Activated T-helper 2 cell treated with anti-CD3 and anti-CD28 coated beads, Interferon-gamma antibody, Interleukin-2, Interleukin-4, amounts not matched to agents 10 μg/mL and 5 μg/mL and 100 μg/mL, durations not matched to agents 14 hours and 24 hours and 36 hours (primary cell): ENCODE measurements at regions of chr9 and their contacts with region 1.

Region 1: GRCh38 chr9:68584189-68585033 is 43.7 kb upstream of the TMEM252 start:
- DNase-seq: peak; percentile 71
- H3K4me3 Mint-ChIP-seq: no peak overlapping the region
- H3K27ac Mint-ChIP-seq: peak overlapping the region; percentile 44
- H3K4me1 Mint-ChIP-seq: peaks cover 14% of the 10 kb centered on the region
- H3K27me3 Mint-ChIP-seq: no peaks in the 10 kb centered on the region

Region 2: GRCh38 chr9:68678430-68678829 is 94.0 kb after region 1 on chr9:
- intact Hi-C with region 1: no loop called
- DNase-seq: no peak
- H3K4me3 Mint-ChIP-seq: no peak overlapping the region
- H3K27ac Mint-ChIP-seq: no peak overlapping the region
- H3K4me1 Mint-ChIP-seq: peaks cover 12% of the 10 kb centered on the region
- H3K27me3 Mint-ChIP-seq: peaks cover 8% of the 10 kb centered on the region

Region 3: DNA sequence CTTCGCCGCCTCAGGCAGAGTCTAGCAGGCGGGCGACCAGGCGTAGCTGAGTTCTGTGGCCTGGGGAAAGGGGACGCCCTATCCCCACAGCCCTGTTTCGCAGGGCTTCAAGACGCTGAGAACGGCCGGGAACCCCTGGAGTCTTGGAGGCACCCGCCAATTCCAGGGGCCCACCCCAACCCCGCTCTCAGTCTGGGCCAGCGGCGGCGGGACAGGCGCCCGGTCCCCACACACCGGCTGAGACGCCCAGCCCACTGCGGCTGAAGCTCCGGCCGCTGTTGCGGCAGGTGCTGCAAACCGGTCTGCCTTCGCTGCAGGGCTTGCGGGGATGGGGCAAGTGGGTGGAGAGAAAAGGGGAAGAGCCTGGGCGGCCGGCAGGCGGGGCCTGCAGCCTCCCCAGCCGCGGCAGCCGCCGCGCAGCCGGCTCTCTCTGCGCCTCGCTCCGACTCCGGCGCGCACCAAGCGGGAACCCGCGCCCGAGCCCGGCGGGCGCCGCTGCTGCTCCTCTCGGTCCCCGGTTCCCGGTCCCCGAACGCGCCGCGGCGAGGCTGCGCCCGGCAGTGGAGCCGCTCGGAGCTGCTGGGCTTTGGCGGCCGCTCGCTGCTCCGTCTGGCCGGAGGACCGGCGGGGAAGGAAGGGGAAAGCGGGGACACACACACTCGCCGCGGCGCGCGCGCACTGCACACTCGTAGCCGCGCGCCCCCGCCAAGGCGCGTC is 120.6 kb after region 1 on chr9 and contains the start of gene PIP5K1B:
- intact Hi-C with region 1: loop called (anchors 1 kb)
- DNase-seq: peak; percentile 69
- H3K4me3 Mint-ChIP-seq: peak within 1 kb of the TSS; percentile 88
- H3K27ac Mint-ChIP-seq: peak within 1 kb of the TSS; percentile 67
- H3K4me1 Mint-ChIP-seq: peaks cover 54% of the 10 kb centered on the region
- H3K27me3 Mint-ChIP-seq: peaks cover 36% of the 10 kb centered on the region
- total RNA-seq, gene PIP5K1B: 76.2 and 77.2 TPM in 2 replicates

Region 4: GRCh38 chr9:68779558-68780384 is 195.4 kb after region 1 on chr9:
- intact Hi-C with region 1: loop called (anchors 1 kb)
- DNase-seq: peak; percentile 91
- H3K4me3 Mint-ChIP-seq: no peak overlapping the region
- H3K27ac Mint-ChIP-seq: no peak overlapping the region
- H3K4me1 Mint-ChIP-seq: peaks cover 17% of the 10 kb centered on the region
- H3K27me3 Mint-ChIP-seq: no peaks in the 10 kb centered on the region

Region 5: GRCh38 chr9:68887232-68887631 is 302.8 kb after region 1 on chr9:
- intact Hi-C with region 1: loop called (anchors 10 kb)
- DNase-seq: no peak
- H3K4me3 Mint-ChIP-seq: peak overlapping the region; percentile 17
- H3K27ac Mint-ChIP-seq: peak overlapping the region; percentile 62
- H3K4me1 Mint-ChIP-seq: peaks cover 35% of the 10 kb centered on the region
- H3K27me3 Mint-ChIP-seq: no peaks in the 10 kb centered on the region

Region 6: GRCh38 chr9:69027355-69028096 is 443.1 kb after region 1 on chr9:
- intact Hi-C with region 1: loop called (anchors 1 kb)
- DNase-seq: peak; percentile 30
- H3K4me3 Mint-ChIP-seq: no peak overlapping the region
- H3K27ac Mint-ChIP-seq: no peak overlapping the region
- H3K4me1 Mint-ChIP-seq: peaks cover 54% of the 10 kb centered on the region
- H3K27me3 Mint-ChIP-seq: no peaks in the 10 kb centered on the region

Region 7: DNA sequence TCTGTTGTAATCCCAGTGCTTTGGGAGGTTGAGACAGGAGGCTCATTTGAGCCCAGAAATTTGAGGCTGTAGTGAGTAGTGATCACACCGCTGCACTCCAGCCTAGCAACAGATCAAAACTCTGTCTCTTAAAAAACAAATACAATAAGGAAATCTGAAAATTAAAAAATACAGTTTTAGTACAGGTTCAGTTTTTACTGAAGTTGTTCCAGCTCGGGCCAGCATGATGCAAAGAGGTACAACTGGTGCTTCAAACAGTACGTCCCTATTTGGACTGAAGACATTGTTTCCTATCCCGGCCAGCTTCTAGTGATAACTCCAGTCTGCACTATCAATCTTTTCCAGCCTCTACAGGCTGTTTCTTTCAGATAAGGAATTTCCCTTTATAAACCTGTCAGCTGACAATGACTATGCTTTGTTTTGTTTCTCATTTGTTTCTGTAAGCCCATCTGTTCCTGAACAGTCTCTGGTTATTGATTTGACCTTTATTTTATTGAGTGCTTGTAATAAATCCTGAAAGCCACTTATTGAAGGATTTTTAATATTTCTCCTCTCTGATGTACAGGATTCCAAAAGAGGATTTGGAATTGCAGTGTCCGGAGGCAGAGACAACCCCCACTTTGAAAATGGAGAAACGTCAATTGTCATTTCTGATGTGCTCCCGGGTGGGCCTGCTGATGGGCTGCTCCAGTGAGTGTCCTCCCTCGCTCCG is 631.5 kb after region 1 on chr9:
- intact Hi-C with region 1: no loop called
- DNase-seq: no peak
- H3K4me3 Mint-ChIP-seq: no peak overlapping the region
- H3K27ac Mint-ChIP-seq: no peak overlapping the region
- H3K4me1 Mint-ChIP-seq: no peaks in the 10 kb centered on the region
- H3K27me3 Mint-ChIP-seq: no peaks in the 10 kb centered on the region